H1 (cell line): ENCODE measurements at regions of chr16 and their contacts with region 1.

Region 1: DNA sequence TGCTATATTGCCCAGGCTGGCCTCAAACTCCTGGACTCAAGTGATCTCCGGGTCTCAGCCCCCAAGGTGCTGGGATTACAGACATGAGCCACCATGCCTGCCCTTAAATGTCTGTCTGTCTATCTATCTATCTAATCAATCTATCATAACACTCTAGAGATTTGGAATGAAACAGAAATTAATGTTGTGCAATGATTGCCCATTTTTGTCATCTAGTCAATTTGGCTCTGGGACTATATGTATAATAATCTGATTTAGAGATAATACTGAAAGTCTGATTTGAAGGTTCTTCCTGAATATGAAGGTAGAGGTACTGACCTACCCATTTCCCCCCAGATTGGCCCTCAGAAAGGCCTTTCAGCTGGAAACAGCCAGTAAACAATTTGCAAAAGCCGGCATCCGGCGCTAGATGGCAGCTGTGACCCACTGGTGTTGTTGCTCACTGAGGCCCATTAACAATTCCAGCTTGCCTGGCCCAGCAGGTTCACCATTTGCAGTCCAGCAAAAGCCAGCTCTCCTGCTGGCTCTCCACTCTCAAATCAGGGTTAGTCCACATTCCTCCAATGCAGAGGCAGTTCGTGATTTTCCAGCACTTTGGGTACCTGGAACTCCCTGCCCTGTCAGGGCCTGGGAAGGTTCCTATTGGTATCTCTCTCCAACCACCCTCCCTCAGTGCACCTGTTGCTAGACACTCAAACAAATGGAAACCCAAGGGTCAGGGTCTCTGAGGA is 22.9 kb upstream of the C16orf87 start:
- DNase-seq: peak; percentile 70 to 87
- H3K4me3 ChIP-seq: no peak overlapping the region
- H3K27ac ChIP-seq: no peak overlapping the region
- H3K4me1 ChIP-seq: peaks cover 0 to 4% (median 0%) of the 10 kb centered on the region in 4 experiments; a peak in 4 of 7 replicates
- H3K27me3 ChIP-seq: no peaks in the 10 kb centered on the region
- CTCF ChIP-seq: peak; percentile 79 to 96 (median 93)
- EP300 ChIP-seq: 0 out of 3 replicates have a peak, but pooled peaks of 1 of the 2 experiments have one; percentile 9
- POLR2A ChIP-seq: no peak
- RAD21 ChIP-seq: peak; percentile 99

Region 2: GRCh38 chr16:46826631-46827030 is 27.2 kb before region 1 on chr16:
- CTCF ChIA-PET with region 1: no interaction called
- POLR2A ChIA-PET with region 1: no interaction called
- DNase-seq: no peak
- H3K4me3 ChIP-seq: no peak overlapping the region
- H3K27ac ChIP-seq: no peak overlapping the region
- H3K4me1 ChIP-seq: peaks cover 0 to 2% (median 0%) of the 10 kb centered on the region in 4 experiments; a peak in 2 of 7 replicates
- H3K27me3 ChIP-seq: no peaks in the 10 kb centered on the region
- CTCF ChIP-seq: no peak
- EP300 ChIP-seq: no peak
- POLR2A ChIP-seq: no peak
- RAD21 ChIP-seq: no peak

Region 3: DNA sequence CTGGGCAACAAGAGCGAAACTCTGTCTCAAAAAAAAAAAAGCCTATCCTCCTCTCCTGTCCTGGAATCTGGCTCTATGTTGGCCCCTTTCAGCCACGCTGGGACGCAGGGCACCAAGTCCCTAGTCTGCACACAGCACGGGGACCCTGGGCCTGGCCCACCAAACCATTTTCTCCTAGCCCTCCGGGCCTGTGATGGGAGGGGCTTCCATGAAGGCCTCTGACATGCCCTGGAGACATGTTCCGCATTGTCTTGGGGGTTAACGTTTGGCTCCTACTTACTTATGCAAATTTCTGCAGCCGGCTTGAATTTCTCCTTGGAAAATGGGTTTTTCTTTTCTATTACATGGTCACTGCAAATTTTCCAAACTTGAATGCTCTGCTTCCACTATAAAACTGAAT is 17.7 kb after region 1 on chr16:
- CTCF ChIA-PET with region 1: interaction called, 29 read pairs
- POLR2A ChIA-PET with region 1: interaction called, 4 read pairs
- DNase-seq: no peak
- H3K4me3 ChIP-seq: no peak overlapping the region
- H3K27ac ChIP-seq: no peak overlapping the region
- H3K4me1 ChIP-seq: no peaks in the 10 kb centered on the region
- H3K27me3 ChIP-seq: no peaks in the 10 kb centered on the region
- CTCF ChIP-seq: no peak
- EP300 ChIP-seq: no peak
- POLR2A ChIP-seq: no peak
- RAD21 ChIP-seq: no peak

Region 4: DNA sequence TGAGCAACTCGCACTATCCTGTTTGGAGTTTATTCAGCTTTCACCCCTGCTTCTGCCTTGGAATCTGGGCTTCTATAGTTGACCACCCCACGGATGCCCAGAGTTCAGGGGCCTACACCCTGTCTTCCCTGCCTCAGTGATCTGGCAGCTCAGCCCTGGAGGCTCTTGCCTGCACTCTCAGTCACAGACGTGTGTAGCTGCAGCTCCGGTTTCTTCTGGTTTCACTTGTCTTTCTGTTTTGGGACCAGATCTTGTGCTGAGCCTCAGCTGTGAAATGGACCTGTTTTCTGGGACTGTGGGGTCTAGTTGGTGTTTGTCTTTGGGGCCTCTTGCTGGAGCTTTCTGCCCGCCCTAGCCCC is 36.0 kb after region 1 on chr16:
- CTCF ChIA-PET with region 1: interaction called, 31 read pairs
- POLR2A ChIA-PET with region 1: interaction called, 150 read pairs
- DNase-seq: no peak
- H3K4me3 ChIP-seq: no peak overlapping the region
- H3K27ac ChIP-seq: no peak overlapping the region
- H3K4me1 ChIP-seq: peaks cover 0 to 17% (median 11%) of the 10 kb centered on the region in 4 experiments; a peak in 6 of 7 replicates
- H3K27me3 ChIP-seq: no peaks in the 10 kb centered on the region
- CTCF ChIP-seq: no peak
- EP300 ChIP-seq: no peak
- POLR2A ChIP-seq: no peak
- RAD21 ChIP-seq: no peak

Region 5: GRCh38 chr16:46908540-46909372 is 54.9 kb after region 1 on chr16:
- CTCF ChIA-PET with region 1: interaction called, 124 read pairs
- POLR2A ChIA-PET with region 1: interaction called, 15 read pairs
- DNase-seq: peak; percentile 27 to 81
- H3K4me3 ChIP-seq: no peak overlapping the region
- H3K27ac ChIP-seq: no peak overlapping the region; the same call in 1 of the 2 replicates
- H3K4me1 ChIP-seq: no peaks in the 10 kb centered on the region
- H3K27me3 ChIP-seq: no peaks in the 10 kb centered on the region
- CTCF ChIP-seq: peak; percentile 26 to 82 (median 66)
- EP300 ChIP-seq: no peak
- POLR2A ChIP-seq: no peak
- RAD21 ChIP-seq: peak; percentile 60 to 75

Region 6: DNA sequence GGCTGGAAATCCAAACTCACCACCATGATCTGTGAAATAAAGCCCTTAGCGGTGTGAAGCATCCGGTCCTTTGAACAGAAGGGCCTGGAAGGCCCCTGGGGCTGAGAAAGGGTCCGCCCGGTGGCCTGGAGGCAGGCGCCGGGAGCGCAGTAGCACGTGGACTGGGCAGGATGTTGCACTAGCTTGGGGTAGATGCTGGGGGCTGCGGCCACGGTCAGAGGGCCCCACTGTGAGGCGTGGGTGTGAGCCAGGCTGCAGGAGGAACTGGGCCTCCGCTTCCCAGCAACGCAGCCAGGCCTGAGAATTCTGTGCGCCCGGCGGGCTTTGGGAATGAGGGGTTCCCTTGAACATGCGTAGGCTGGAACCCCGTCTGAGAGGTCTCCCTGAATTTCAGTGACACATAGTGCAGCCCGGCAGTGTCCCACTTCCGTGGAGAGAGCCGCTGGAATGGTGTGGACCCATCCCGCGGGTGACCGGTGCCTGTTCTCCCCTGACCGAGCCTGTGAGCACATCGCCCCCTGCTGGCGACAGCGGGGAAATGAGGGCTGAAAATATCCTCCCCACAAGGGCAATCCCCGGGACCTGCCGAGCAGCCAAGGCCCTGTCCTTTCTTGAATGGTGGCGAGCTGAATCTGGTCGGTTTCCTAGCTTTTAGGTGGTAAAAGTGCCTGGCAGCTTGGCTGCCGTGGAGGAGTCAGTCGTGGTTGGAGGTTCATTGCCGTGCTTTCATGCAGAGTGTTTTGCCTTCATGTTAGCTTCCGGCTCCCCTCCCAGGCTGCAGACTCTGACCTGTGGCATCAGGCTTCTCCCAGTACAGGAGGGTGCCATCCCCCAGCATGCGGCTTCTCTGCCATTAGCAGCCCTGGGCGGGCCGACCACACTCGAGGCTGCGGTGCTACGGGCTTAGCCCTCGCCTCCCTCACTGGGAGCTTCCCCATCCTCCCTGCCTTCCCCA is 75.8 kb after region 1 on chr16:
- CTCF ChIA-PET with region 1: interaction called, 61 read pairs
- POLR2A ChIA-PET with region 1: interaction called, 5 read pairs
- DNase-seq: peak; percentile 53 to 94
- H3K4me3 ChIP-seq: no peak overlapping the region
- H3K27ac ChIP-seq: no peak overlapping the region
- H3K4me1 ChIP-seq: peaks cover 0 to 3% (median 0%) of the 10 kb centered on the region in 4 experiments; a peak in 1 of 7 replicates
- H3K27me3 ChIP-seq: no peaks in the 10 kb centered on the region
- CTCF ChIP-seq: peak; percentile 79 to 98 (median 92)
- EP300 ChIP-seq: no peak
- POLR2A ChIP-seq: no peak
- RAD21 ChIP-seq: peak; percentile 61 to 69